ENCODE measurements at regions of chr6 and their contacts with region 1.

Region 1: GRCh38 chr6:11496152-11497060 is 41.1 kb upstream of the TMEM170B start:
- DNase-seq: peak; percentile 47 to 79 (median 73)
- H3K4me3 ChIP-seq: no peak overlapping the region
- H3K4me3 Mint-ChIP-seq: peak overlapping the region in 1 of 7 donors; percentile 18
- H3K27ac ChIP-seq: no peak overlapping the region
- H3K27ac Mint-ChIP-seq: peak overlapping the region in 3 of 8 donors; percentile 38 to 63 (median 44)
- H3K4me1 ChIP-seq: no peaks in the 10 kb centered on the region
- H3K4me1 Mint-ChIP-seq: peaks cover 9 to 18% (median 16%) of the 10 kb centered on the region in 3 donors
- H3K27me3 ChIP-seq: no peaks in the 10 kb centered on the region
- H3K27me3 Mint-ChIP-seq: no peaks in the 10 kb centered on the region

Region 2: GRCh38 chr6:11144393-11144851 is 352.0 kb before region 1 on chr6:
- CTCF ChIA-PET with region 1: interaction called, 82 read pairs
- POLR2A ChIA-PET with region 1: interaction called, 3 read pairs
- DNase-seq: peak; percentile 48 to 79 (median 63)
- H3K4me3 ChIP-seq: no peak overlapping the region
- H3K4me3 Mint-ChIP-seq: no peak overlapping the region
- H3K27ac ChIP-seq: no peak overlapping the region
- H3K27ac Mint-ChIP-seq: peak overlapping the region in 1 of 8 donors; percentile 49
- H3K4me1 ChIP-seq: no peaks in the 10 kb centered on the region
- H3K4me1 Mint-ChIP-seq: peaks cover 0 to 4% (median 4%) of the 10 kb centered on the region in 3 donors
- H3K27me3 ChIP-seq: no peaks in the 10 kb centered on the region
- H3K27me3 Mint-ChIP-seq: no peaks in the 10 kb centered on the region

Region 3: DNA sequence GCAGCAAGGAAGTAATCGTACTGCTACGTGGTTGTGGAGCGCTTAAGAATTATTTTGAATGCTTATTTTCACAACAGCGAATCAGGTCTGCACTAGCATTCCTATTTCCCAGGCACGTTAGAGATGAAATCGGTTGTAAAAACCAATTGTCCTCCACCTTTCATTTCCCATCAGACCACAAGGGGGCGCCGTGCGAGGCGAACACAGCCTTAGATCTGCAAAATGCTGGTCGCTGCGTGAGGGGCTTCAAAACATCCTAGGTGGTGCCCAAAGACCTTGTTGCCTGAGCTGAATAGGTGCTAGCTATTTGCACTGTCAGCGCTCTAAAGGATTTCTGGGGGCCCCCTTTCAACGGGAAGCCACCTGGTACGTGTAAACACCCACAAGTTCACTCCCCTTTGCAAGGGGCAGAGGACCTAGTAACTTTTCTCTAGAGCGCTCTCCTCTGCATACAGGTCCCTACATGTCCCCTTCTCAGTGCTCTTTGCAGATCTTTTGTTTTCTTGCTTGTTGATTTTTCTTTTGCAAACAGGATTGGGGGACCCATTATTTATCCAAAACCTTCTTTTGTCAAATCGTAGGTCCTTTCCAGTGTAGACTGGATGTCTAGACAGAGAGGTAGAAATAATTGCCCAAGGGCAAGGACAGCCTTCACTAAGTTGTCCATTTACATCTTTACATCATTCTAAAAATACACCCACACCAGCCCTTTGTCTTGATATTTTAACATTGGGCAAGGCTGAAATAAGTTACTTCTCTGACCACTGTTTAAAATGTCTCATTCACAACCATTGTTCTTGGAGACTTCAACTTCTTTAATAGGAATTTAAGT is 323.7 kb before region 1 on chr6:
- CTCF ChIA-PET with region 1: interaction called, 154 read pairs
- POLR2A ChIA-PET with region 1: no interaction called
- DNase-seq: peak; percentile 55 to 83 (median 69)
- H3K4me3 ChIP-seq: peak overlapping the region; percentile 1
- H3K4me3 Mint-ChIP-seq: peak overlapping the region in 6 of 7 donors; percentile 60 to 82 (median 68)
- H3K27ac ChIP-seq: no peak overlapping the region
- H3K27ac Mint-ChIP-seq: peak overlapping the region; percentile 13 to 92 (median 62)
- H3K4me1 ChIP-seq: peaks cover 10% of the 10 kb centered on the region
- H3K4me1 Mint-ChIP-seq: peaks cover 12 to 26% (median 15%) of the 10 kb centered on the region in 3 donors
- H3K27me3 ChIP-seq: no peaks in the 10 kb centered on the region
- H3K27me3 Mint-ChIP-seq: no peaks in the 10 kb centered on the region

Region 4: GRCh38 chr6:11480541-11480940 is 15.9 kb before region 1 on chr6:
- CTCF ChIA-PET with region 1: interaction called, 13 read pairs
- POLR2A ChIA-PET with region 1: no interaction called
- DNase-seq: no peak
- H3K4me3 ChIP-seq: no peak overlapping the region
- H3K4me3 Mint-ChIP-seq: no peak overlapping the region
- H3K27ac ChIP-seq: no peak overlapping the region
- H3K27ac Mint-ChIP-seq: no peak overlapping the region
- H3K4me1 ChIP-seq: no peaks in the 10 kb centered on the region
- H3K4me1 Mint-ChIP-seq: no peaks in the 10 kb centered on the region
- H3K27me3 ChIP-seq: no peaks in the 10 kb centered on the region
- H3K27me3 Mint-ChIP-seq: peaks cover 2 to 10% of the 10 kb centered on the region in 2 donors

Region 5: GRCh38 chr6:11509471-11509870 is 13.1 kb after region 1 on chr6:
- CTCF ChIA-PET with region 1: interaction called, 15 read pairs
- POLR2A ChIA-PET with region 1: no interaction called
- DNase-seq: no peak
- H3K4me3 ChIP-seq: no peak overlapping the region
- H3K4me3 Mint-ChIP-seq: no peak overlapping the region
- H3K27ac ChIP-seq: no peak overlapping the region
- H3K27ac Mint-ChIP-seq: no peak overlapping the region
- H3K4me1 ChIP-seq: no peaks in the 10 kb centered on the region
- H3K4me1 Mint-ChIP-seq: peaks cover 0 to 4% (median 0%) of the 10 kb centered on the region in 3 donors
- H3K27me3 ChIP-seq: no peaks in the 10 kb centered on the region
- H3K27me3 Mint-ChIP-seq: peaks cover 17 to 67% of the 10 kb centered on the region in 2 donors

Region 6: GRCh38 chr6:11732036-11732631 is 235.7 kb after region 1 on chr6:
- CTCF ChIA-PET with region 1: no interaction called
- POLR2A ChIA-PET with region 1: no interaction called
- DNase-seq: no peak
- H3K4me3 ChIP-seq: peak overlapping the region; percentile 40
- H3K4me3 Mint-ChIP-seq: no peak overlapping the region
- H3K27ac ChIP-seq: no peak overlapping the region
- H3K27ac Mint-ChIP-seq: no peak overlapping the region
- H3K4me1 ChIP-seq: peaks cover 44% of the 10 kb centered on the region
- H3K4me1 Mint-ChIP-seq: peaks cover 11 to 21% (median 19%) of the 10 kb centered on the region in 3 donors
- H3K27me3 ChIP-seq: no peaks in the 10 kb centered on the region
- H3K27me3 Mint-ChIP-seq: peaks cover 15 to 41% of the 10 kb centered on the region in 2 donors

Measured in CD8-positive, alpha-beta memory T cell (primary cell).